ENCODE measurements at regions of chr10 and their contacts with region 1.

Region 1: GRCh38 chr10:121880895-121881294 is 46.9 kb downstream of the ATE1 start:
- DNase-seq: peak; percentile 41
- H3K4me3 ChIP-seq: peak overlapping the region; percentile 17
- H3K27ac ChIP-seq: peak overlapping the region; percentile 57
- H3K4me1 ChIP-seq: peaks cover 18% of the 10 kb centered on the region
- CTCF ChIP-seq: no peak

Region 2: DNA sequence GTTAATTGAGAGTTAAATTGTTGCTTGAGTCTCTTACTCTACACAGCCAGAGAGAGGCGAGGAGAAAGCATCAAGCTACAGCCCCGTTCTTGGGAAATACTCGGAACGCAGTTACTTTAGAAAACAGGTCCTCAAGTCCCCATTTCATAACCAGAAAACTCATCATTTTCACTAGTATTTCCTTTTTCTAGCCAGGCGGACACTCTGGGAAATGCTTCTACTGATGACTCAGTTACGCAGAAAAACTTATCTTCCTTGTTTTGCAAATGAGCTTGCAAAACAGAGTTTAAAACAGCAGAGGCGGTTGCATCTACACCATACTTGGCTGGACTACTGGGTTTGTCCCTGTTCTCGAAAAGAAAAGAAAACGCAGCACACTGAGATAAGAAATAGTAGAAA is 171.2 kb before region 1 on chr10:
- CTCF ChIA-PET with region 1: no interaction called
- POLR2A ChIA-PET with region 1: no interaction called
- intact Hi-C with region 1: no loop called
- DNase-seq: no peak
- H3K4me3 ChIP-seq: no peak overlapping the region
- H3K27ac ChIP-seq: no peak overlapping the region
- H3K4me1 ChIP-seq: no peaks in the 10 kb centered on the region
- CTCF ChIP-seq: no peak

Region 3: GRCh38 chr10:121865554-121865953 is 15.3 kb before region 1 on chr10:
- CTCF ChIA-PET with region 1: no interaction called
- POLR2A ChIA-PET with region 1: interaction called, 10 read pairs
- intact Hi-C with region 1: no loop called
- DNase-seq: no peak
- H3K4me3 ChIP-seq: no peak overlapping the region
- H3K27ac ChIP-seq: no peak overlapping the region
- H3K4me1 ChIP-seq: peaks cover 15% of the 10 kb centered on the region
- CTCF ChIP-seq: no peak